Activated T-helper 1 cell treated with anti-CD3 and anti-CD28 coated beads, Interleukin-12 subunit alpha, Interleukin-12 subunit beta, Interleukin-2, Interleukin-4 antibody, amounts not matched to agents 30 ng/mL and 10 ng/mL and 1 ng/mL, durations not matched to agents 14 hours and 24 hours and 36 hours (primary cell): ENCODE measurements at regions of chr20 and their contacts with region 1.

Region 1: GRCh38 chr20:34747479-34747878 is 43.3 kb downstream of the TP53INP2 start:
- DNase-seq: no peak
- H3K4me3 Mint-ChIP-seq: no peak overlapping the region
- H3K27ac Mint-ChIP-seq: no peak overlapping the region
- H3K4me1 Mint-ChIP-seq: peaks cover 9% of the 10 kb centered on the region
- H3K27me3 Mint-ChIP-seq: no peaks in the 10 kb centered on the region

Region 2: DNA sequence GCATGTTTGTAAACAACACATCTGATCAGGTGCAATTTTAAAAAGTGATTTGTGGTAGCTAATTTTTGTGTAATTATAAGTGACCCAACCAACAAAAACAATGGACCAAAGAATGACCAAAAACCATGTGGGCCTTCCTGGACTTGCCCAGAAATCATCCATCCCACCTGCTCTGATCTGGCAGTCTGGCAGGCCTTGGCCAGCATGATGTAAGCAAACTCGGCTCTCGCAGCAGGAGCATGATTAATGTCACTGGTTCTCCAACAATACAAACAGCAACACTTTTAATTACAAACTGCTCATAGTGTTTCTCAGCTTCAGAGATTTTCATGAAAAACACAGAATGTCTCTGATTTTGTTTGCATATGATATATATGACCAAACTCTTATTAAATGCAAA is 27.2 kb before region 1 on chr20:
- intact Hi-C with region 1: loop called (anchors 2 kb)
- DNase-seq: no peak
- H3K4me3 Mint-ChIP-seq: no peak overlapping the region
- H3K27ac Mint-ChIP-seq: no peak overlapping the region
- H3K4me1 Mint-ChIP-seq: peaks cover 34% of the 10 kb centered on the region
- H3K27me3 Mint-ChIP-seq: no peaks in the 10 kb centered on the region